Mammary epithelial cell (primary cell): ENCODE measurements at regions of chr14 and their contacts with region 1.

Region 1: GRCh38 chr14:69335371-69335771 is 62.7 kb downstream of the ERH start:
- DNase-seq: peak; percentile 82
- H3K4me3 ChIP-seq: no peak overlapping the region
- H3K27ac ChIP-seq: no peak overlapping the region
- H3K4me1 ChIP-seq: peaks cover 4% of the 10 kb centered on the region
- H3K27me3 ChIP-seq: no peaks in the 10 kb centered on the region
- CTCF ChIP-seq: no peak

Region 2: DNA sequence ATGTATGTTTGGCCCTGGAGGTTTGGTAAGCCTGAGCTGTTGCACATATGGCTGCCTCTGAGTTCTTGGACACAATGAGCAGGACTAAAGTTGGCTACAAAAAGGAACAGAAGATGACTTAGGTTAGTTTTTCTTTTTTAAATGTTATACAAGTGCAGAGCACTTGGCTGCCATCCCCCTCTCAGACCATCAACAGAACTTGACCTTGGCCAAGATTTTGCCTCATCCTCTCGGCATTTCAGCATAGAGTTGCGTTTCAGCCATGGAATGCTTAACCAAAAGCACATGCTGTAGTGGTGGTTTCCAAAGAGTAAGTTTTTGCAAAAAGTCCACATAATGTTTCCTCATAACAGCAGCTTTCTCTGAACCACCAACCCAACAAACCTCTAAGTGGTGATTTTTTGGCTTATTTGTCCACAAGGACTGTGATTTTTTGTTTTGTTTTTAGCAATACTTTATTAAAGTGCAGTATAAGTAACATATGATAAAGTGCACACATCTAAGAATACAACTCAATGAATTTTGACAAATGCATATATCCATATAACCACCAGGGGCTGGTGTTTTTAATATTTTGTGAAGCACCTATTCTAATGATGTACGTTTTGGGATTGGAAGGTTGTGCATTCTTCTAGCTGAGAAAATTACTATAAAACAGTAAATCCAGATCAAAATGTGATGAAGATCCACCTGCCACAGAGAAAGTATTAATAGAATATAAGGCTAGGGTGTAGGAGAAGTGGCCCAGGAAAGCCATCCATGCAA is 87.5 kb before region 1 on chr14:
- CTCF ChIA-PET with region 1: no interaction called
- dilution Hi-C with region 1: no loop called
- in situ Hi-C with region 1: no loop called
- intact Hi-C with region 1: loop called (anchors 5 kb)
- DNase-seq: no peak
- H3K4me3 ChIP-seq: no peak overlapping the region
- H3K27ac ChIP-seq: no peak overlapping the region
- H3K4me1 ChIP-seq: no peaks in the 10 kb centered on the region
- H3K27me3 ChIP-seq: no peaks in the 10 kb centered on the region
- CTCF ChIP-seq: peak; percentile 19 to 23